ENCODE measurements at regions of chr10 and their contacts with region 1.

Region 1: DNA sequence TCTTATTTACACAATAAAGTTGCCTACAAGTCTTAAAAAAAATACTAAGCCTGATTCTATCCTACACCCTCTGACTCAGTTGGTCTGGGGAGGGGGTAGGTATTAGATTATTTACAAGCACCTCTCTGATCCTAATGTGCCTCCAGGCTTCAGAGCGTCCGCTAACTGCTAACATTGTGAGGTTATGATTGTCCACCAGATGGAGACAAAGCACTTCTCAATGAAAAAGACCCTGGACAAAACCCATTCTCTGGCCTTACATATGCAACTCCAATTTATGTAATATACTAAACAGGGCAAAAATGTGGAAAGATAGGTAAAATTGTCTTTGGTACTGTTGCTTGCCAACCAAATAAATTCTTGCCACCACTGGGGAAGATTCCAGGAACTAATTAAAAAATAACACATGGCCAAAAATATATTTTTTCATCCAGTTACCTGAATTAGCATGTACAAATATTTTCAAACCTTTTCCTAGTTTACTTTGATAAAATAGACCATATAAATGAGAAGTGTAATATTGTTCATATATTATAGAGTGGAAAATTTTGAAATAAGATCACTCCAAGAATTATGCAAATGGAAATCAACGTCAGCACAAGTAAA is 92.4 kb downstream of the KIF20B start:
- DNase-seq: peak; percentile 73
- H3K4me3 ChIP-seq: no peak overlapping the region
- H3K27ac ChIP-seq: no peak overlapping the region
- H3K4me1 ChIP-seq: peaks cover 8% of the 10 kb centered on the region
- H3K27me3 ChIP-seq: peaks cover 0 to 2% of the 10 kb centered on the region in 2 experiments
- CTCF ChIP-seq: peak; percentile 63 to 66
- POLR2A ChIP-seq: no peak

Region 2: DNA sequence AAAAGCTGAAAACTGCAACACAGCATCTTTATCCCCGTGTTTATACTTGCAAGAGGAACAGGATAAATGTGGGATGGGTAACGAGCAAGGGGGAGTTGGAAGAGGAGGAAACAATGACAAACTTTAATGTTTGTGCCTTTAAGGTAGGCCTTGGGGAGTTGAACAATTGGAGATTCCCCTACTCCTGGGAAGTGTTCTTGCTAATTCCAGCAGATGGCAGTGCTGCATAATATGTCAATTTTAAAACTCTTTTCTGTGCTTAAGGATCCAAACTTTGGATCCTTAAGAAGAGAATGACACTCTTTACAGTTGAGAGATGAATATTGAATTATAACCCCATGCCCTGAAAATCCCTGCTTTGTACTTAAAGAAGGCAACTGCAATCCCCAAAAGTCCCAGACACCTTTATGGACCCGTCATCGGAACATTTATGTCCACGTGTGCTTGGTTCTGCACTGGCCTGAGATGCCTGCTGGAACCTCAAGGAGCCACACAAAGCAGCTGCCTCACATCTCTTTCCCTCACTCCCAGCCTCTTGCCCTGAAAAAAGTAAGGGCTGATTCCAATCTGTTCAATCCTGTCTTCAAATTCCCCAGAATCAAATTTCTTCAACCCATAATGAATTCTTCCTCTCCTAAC is 367.4 kb before region 1 on chr10:
- CTCF ChIA-PET with region 1: no interaction called
- POLR2A ChIA-PET with region 1: no interaction called
- dilution Hi-C with region 1: no loop called
- intact Hi-C with region 1: loop called (anchors 1 kb)
- DNase-seq: peak; percentile 56
- H3K4me3 ChIP-seq: no peak overlapping the region
- H3K27ac ChIP-seq: no peak overlapping the region
- H3K4me1 ChIP-seq: no peaks in the 10 kb centered on the region
- H3K27me3 ChIP-seq: no peaks in the 10 kb centered on the region
- CTCF ChIP-seq: peak; percentile 58
- POLR2A ChIP-seq: no peak

Region 3: DNA sequence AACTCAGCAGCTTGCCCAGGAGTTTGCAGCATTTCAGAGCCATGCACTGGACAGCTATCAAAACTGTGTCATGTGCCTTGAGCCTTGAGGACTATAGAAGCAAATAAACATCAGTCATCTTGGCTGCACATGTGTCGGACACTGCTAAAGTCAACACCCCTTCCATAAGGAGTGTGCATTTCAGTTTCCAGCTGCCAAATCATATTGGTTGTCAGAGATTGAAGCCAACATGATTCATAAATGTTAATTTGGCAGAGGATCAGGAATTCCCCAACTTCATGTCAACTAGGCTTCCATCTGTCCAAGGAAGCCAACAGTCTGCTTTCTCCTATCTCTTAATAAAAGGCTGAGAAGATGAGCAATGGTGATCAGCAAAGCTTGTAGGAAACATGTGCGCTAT is 291.2 kb before region 1 on chr10:
- CTCF ChIA-PET with region 1: no interaction called
- POLR2A ChIA-PET with region 1: no interaction called
- dilution Hi-C with region 1: no loop called
- intact Hi-C with region 1: no loop called
- DNase-seq: peak; percentile 15
- H3K4me3 ChIP-seq: no peak overlapping the region
- H3K27ac ChIP-seq: no peak overlapping the region
- H3K4me1 ChIP-seq: no peaks in the 10 kb centered on the region
- H3K27me3 ChIP-seq: no peaks in the 10 kb centered on the region
- CTCF ChIP-seq: no peak
- POLR2A ChIP-seq: no peak

Region 4: GRCh38 chr10:89710753-89711152 is 83.0 kb before region 1 on chr10:
- CTCF ChIA-PET with region 1: no interaction called
- POLR2A ChIA-PET with region 1: no interaction called
- dilution Hi-C with region 1: no loop called
- intact Hi-C with region 1: no loop called
- DNase-seq: peak; percentile 18
- H3K4me3 ChIP-seq: no peak overlapping the region
- H3K27ac ChIP-seq: no peak overlapping the region
- H3K4me1 ChIP-seq: no peaks in the 10 kb centered on the region
- H3K27me3 ChIP-seq: no peaks in the 10 kb centered on the region
- CTCF ChIP-seq: no peak
- POLR2A ChIP-seq: no peak

Region 5: DNA sequence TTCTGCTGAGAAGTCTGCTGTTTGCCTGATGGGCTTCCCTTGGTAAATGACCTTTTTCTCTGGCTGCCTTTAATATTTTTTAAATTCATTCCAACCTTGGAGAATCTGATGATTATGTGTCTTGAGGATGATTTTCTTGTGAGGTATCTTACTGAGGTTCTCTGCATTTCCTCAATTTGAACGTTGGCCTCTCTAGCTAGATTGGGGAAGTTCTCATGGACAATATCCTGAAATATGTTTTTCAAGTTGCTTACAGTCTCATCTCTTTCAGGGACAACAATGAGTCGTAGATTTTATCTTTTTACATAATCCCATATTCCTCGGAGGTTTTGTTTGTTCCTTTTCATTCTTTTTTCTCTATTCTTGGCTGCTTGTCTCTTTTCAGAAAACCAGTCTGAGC is 116.0 kb after region 1 on chr10:
- CTCF ChIA-PET with region 1: no interaction called
- POLR2A ChIA-PET with region 1: no interaction called
- dilution Hi-C with region 1: no loop called
- intact Hi-C with region 1: no loop called
- DNase-seq: no peak
- H3K4me3 ChIP-seq: no peak overlapping the region
- H3K27ac ChIP-seq: no peak overlapping the region
- H3K4me1 ChIP-seq: no peaks in the 10 kb centered on the region
- H3K27me3 ChIP-seq: no peaks in the 10 kb centered on the region
- CTCF ChIP-seq: no peak
- POLR2A ChIP-seq: no peak

Region 6: GRCh38 chr10:90138844-90139243 is 345.1 kb after region 1 on chr10:
- CTCF ChIA-PET with region 1: interaction called, 3 read pairs
- POLR2A ChIA-PET with region 1: no interaction called
- dilution Hi-C with region 1: no loop called
- intact Hi-C with region 1: loop called (anchors 1 kb)
- DNase-seq: peak; percentile 6
- H3K4me3 ChIP-seq: no peak overlapping the region
- H3K27ac ChIP-seq: no peak overlapping the region
- H3K4me1 ChIP-seq: no peaks in the 10 kb centered on the region
- H3K27me3 ChIP-seq: peaks cover 0 to 4% of the 10 kb centered on the region in 2 experiments
- CTCF ChIP-seq: peak; percentile 28 to 31
- POLR2A ChIP-seq: no peak

Region 7: DNA sequence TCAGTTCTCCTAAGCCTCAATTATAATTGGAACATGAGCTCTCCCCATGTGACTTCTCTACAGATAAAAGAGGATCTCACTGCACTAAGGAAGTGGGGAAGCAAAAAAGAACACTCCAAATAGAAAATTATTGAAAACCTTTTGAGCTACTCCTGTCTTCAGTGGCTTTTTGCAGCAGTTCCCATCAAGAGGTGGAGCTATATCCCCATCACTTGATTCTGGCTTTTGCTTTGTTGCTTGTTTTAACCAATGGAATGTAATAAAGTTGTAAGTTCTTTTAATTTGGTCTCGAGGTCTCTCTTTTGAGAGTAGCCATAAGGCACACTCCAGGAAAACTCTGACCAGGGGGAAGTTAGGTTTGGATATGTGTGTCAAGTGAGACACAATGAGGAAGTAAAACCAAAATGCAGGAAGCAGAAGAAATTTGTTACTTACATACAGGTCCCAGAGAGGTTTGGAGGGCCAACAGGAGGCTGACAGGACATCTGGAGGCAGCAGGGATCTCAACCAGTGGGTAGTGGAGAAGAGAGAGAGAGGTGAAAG is 494.7 kb after region 1 on chr10:
- CTCF ChIA-PET with region 1: interaction called, 3 read pairs
- POLR2A ChIA-PET with region 1: no interaction called
- dilution Hi-C with region 1: no loop called
- intact Hi-C with region 1: loop called (anchors 5 kb)
- DNase-seq: peak; percentile 68
- H3K4me3 ChIP-seq: no peak overlapping the region
- H3K27ac ChIP-seq: no peak overlapping the region
- H3K4me1 ChIP-seq: peaks cover 6% of the 10 kb centered on the region
- H3K27me3 ChIP-seq: peaks cover 0 to 4% of the 10 kb centered on the region in 2 experiments
- CTCF ChIP-seq: peak in 1 of 2 donors; percentile 24
- POLR2A ChIP-seq: no peak

Region 8: DNA sequence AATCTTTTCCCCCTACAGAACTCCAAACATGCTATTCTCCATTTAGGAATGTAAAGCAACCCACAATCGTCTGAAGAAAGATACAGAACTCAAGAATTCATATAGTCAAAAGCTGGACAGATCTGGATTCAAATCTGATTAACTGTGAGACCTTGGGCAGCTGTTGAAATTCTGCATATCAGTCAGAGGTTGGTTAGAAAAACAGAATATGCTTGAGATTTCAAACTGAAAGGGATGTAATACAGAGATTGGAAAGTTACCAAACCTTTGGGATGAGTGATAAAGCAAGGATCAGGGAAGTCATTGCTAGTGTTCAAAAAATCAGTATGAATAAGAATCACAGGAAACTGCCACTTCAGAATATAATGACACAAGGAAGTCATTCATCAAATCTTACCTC is 657.5 kb after region 1 on chr10:
- CTCF ChIA-PET with region 1: no interaction called
- POLR2A ChIA-PET with region 1: no interaction called
- dilution Hi-C with region 1: no loop called
- intact Hi-C with region 1: no loop called
- DNase-seq: peak; percentile 60
- H3K4me3 ChIP-seq: no peak overlapping the region
- H3K27ac ChIP-seq: no peak overlapping the region
- H3K4me1 ChIP-seq: peaks cover 17% of the 10 kb centered on the region
- H3K27me3 ChIP-seq: peaks cover 0 to 4% of the 10 kb centered on the region in 2 experiments
- CTCF ChIP-seq: no peak
- POLR2A ChIP-seq: no peak

Region 9: GRCh38 chr10:90658791-90659190 is 865.0 kb after region 1 on chr10:
- CTCF ChIA-PET with region 1: no interaction called
- POLR2A ChIA-PET with region 1: no interaction called
- dilution Hi-C with region 1: no loop called
- intact Hi-C with region 1: loop called (anchors 5 kb)
- DNase-seq: no peak
- H3K4me3 ChIP-seq: no peak overlapping the region
- H3K27ac ChIP-seq: no peak overlapping the region
- H3K4me1 ChIP-seq: no peaks in the 10 kb centered on the region
- H3K27me3 ChIP-seq: no peaks in the 10 kb centered on the region
- CTCF ChIP-seq: peak in 1 of 2 donors; percentile 34
- POLR2A ChIP-seq: no peak

Region 10: GRCh38 chr10:90787393-90788198 is 993.8 kb after region 1 on chr10:
- CTCF ChIA-PET with region 1: interaction called, 16 read pairs
- POLR2A ChIA-PET with region 1: no interaction called
- dilution Hi-C with region 1: no loop called
- intact Hi-C with region 1: loop called (anchors 1 kb)
- DNase-seq: peak; percentile 47
- H3K4me3 ChIP-seq: no peak overlapping the region
- H3K27ac ChIP-seq: no peak overlapping the region
- H3K4me1 ChIP-seq: no peaks in the 10 kb centered on the region
- H3K27me3 ChIP-seq: peaks cover 9 to 25% of the 10 kb centered on the region in 2 experiments
- CTCF ChIP-seq: peak; percentile 72 to 78
- POLR2A ChIP-seq: no peak

Measured in endothelial cell of umbilical vein (primary cell).